ENCODE measurements at regions of chr12 and their contacts with region 1.

Region 1: GRCh38 chr12:48750769-48751735 is 34.5 kb upstream of the CCNT1 start:
- DNase-seq: peak; percentile 37
- ATAC-seq: peak; percentile 87
- H3K4me3 Mint-ChIP-seq: peak overlapping the region; percentile 34
- H3K27ac Mint-ChIP-seq: peak overlapping the region; percentile 85
- H3K4me1 Mint-ChIP-seq: peaks cover 24% of the 10 kb centered on the region
- H3K27me3 Mint-ChIP-seq: peaks cover 5% of the 10 kb centered on the region

Region 2: GRCh38 chr12:48542300-48542928 is 208.6 kb before region 1 on chr12:
- CTCF ChIA-PET with region 1: interaction called, 3 read pairs
- POLR2A ChIA-PET with region 1: no interaction called
- intact Hi-C with region 1: loop called in 1 of 2 experiments (anchors 1 kb)
- DNase-seq: peak; percentile 80
- ATAC-seq: peak; percentile 55
- H3K4me3 Mint-ChIP-seq: no peak overlapping the region
- H3K27ac Mint-ChIP-seq: no peak overlapping the region
- H3K4me1 Mint-ChIP-seq: peaks cover 11% of the 10 kb centered on the region
- H3K27me3 Mint-ChIP-seq: no peaks in the 10 kb centered on the region

Region 3: GRCh38 chr12:48696626-48697025 is 54.4 kb before region 1 on chr12:
- CTCF ChIA-PET with region 1: no interaction called
- POLR2A ChIA-PET with region 1: no interaction called
- intact Hi-C with region 1: no loop called
- DNase-seq: no peak
- ATAC-seq: no peak
- H3K4me3 Mint-ChIP-seq: no peak overlapping the region
- H3K27ac Mint-ChIP-seq: no peak overlapping the region
- H3K4me1 Mint-ChIP-seq: peaks cover 5% of the 10 kb centered on the region
- H3K27me3 Mint-ChIP-seq: no peaks in the 10 kb centered on the region

Region 4: GRCh38 chr12:48716493-48717251 is 34.4 kb before region 1 on chr12 and contains the start of gene CCNT1:
- CTCF ChIA-PET with region 1: interaction called, 4 read pairs
- POLR2A ChIA-PET with region 1: no interaction called
- intact Hi-C with region 1: loop called (anchors 1 to 2 kb)
- DNase-seq: peak; percentile 100
- ATAC-seq: peak; percentile 95
- H3K4me3 Mint-ChIP-seq: peak within 1 kb of the TSS; percentile 99
- H3K27ac Mint-ChIP-seq: peak within 1 kb of the TSS; percentile 99
- H3K4me1 Mint-ChIP-seq: peaks cover 37% of the 10 kb centered on the region
- H3K27me3 Mint-ChIP-seq: no peaks in the 10 kb centered on the region
- total RNA-seq, gene CCNT1: 82.2 to 85.1 TPM

Region 5: DNA sequence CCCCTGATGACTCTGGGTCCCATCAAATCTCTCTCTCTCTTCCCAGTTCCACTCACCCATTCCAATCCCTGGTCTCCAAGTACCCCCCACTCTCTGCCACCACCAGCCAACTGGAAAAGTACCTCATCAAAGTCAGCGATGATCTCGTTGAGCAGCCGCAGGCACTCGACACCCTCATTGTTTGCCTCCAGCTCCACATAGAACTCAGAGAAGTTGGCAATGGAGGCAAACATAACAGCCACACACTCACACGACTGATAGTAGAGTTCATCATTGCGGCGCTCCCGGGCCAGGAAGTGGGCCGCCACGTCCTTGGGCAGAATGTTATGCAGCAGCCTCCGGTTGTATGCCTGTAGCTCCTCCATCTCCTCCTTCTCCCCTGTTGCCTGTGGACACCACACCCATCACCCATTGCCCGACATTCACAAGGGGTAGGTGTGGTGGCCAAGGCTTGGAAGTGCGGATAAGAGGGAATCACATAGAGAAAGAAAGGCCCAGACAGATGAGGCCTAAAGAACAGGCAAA is 20.6 kb after region 1 on chr12:
- CTCF ChIA-PET with region 1: no interaction called
- POLR2A ChIA-PET with region 1: no interaction called
- intact Hi-C with region 1: no loop called
- DNase-seq: no peak
- ATAC-seq: no peak
- H3K4me3 Mint-ChIP-seq: no peak overlapping the region
- H3K27ac Mint-ChIP-seq: no peak overlapping the region
- H3K4me1 Mint-ChIP-seq: no peaks in the 10 kb centered on the region
- H3K27me3 Mint-ChIP-seq: peaks cover 2% of the 10 kb centered on the region

Region 6: DNA sequence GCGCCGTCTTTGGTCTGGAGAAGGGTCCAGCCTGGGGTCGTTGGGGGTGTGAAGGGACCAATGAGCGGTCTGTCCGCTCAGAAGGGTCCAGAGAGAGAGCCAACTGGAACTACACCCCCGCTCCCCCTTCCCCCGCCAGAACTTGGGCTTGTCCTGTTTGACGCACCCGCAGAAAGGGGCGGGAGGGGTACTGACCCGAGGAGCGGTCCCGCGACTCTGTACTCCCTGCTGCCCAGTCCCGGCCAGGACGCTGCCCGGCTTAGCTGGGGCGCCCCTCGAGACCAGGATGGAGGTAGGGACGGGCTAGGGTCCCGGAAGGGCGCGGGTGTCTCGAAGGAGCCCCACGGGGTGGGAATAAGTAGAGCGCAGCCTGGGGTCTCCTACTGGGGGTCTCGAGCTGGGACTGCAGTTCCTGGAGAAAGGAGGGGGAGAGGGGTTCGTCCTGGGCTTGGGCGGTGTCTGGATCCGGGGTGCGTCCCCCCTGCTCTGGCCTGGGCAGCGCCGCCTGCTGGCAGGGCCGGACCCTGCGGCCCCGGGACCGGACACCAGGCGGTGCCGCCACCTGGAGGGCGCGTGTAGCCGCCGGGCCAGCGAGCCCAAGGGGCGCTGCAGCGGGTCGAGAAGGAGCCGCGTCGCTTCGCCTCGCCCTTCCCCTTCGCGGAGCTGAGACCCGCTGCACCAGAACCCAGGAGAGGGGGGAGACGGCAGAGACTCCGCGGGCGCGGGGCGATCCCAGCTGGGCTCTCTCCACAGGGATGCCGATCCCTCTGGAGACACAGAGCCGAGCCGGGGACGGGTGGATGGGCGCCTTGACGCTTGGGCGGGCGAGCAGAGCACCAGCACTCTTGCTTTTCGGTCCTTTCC is 63.4 kb after region 1 on chr12:
- CTCF ChIA-PET with region 1: interaction called, 13 read pairs
- POLR2A ChIA-PET with region 1: no interaction called
- intact Hi-C with region 1: loop called (anchors 1 to 5 kb)
- DNase-seq: peak; percentile 90
- ATAC-seq: peak; percentile 77
- H3K4me3 Mint-ChIP-seq: peak overlapping the region; percentile 81
- H3K27ac Mint-ChIP-seq: no peak overlapping the region
- H3K4me1 Mint-ChIP-seq: peaks cover 23% of the 10 kb centered on the region
- H3K27me3 Mint-ChIP-seq: peaks cover 12% of the 10 kb centered on the region

Region 7: GRCh38 chr12:48995061-48995879 is 244.2 kb after region 1 on chr12:
- CTCF ChIA-PET with region 1: no interaction called
- POLR2A ChIA-PET with region 1: no interaction called
- intact Hi-C with region 1: loop called in 1 of 2 experiments (anchors 5 kb)
- DNase-seq: peak; percentile 77
- ATAC-seq: peak; percentile 13
- H3K4me3 Mint-ChIP-seq: no peak overlapping the region
- H3K27ac Mint-ChIP-seq: no peak overlapping the region
- H3K4me1 Mint-ChIP-seq: peaks cover 26% of the 10 kb centered on the region
- H3K27me3 Mint-ChIP-seq: peaks cover 52% of the 10 kb centered on the region